Breast epithelium (tissue), 4 donors: ENCODE measurements at regions of chr12 and their contacts with region 1.

Region 1: GRCh38 chr12:109244073-109244472 is 65.0 kb downstream of the FOXN4 start:
- DNase-seq: no peak
- H3K4me3 ChIP-seq: no peak overlapping the region
- H3K27ac ChIP-seq: no peak overlapping the region
- H3K4me1 ChIP-seq: no peaks in the 10 kb centered on the region
- H3K27me3 ChIP-seq: no peaks in the 10 kb centered on the region
- CTCF ChIP-seq: no peak
- POLR2A ChIP-seq: no peak

Region 2: GRCh38 chr12:108523365-108523764 is 720.7 kb before region 1 on chr12:
- intact Hi-C with region 1: loop called (anchors 5 kb)
- DNase-seq: no peak
- H3K4me3 ChIP-seq: no peak overlapping the region
- H3K27ac ChIP-seq: no peak overlapping the region
- H3K4me1 ChIP-seq: no peaks in the 10 kb centered on the region
- H3K27me3 ChIP-seq: no peaks in the 10 kb centered on the region
- CTCF ChIP-seq: no peak
- POLR2A ChIP-seq: no peak